ENCODE measurements at regions of chr3 and their contacts with region 1.

Region 1: GRCh38 chr3:151210676-151211381 is 7.8 kb upstream of the GPR171 start:
- DNase-seq: peak; percentile 35
- ATAC-seq: peak; percentile 98
- H3K4me3 ChIP-seq: peak overlapping the region; percentile 5 to 48 (median 41); a peak in 5 of 6 replicates
- H3K27ac ChIP-seq: peak overlapping the region; percentile 53
- H3K4me1 ChIP-seq: peaks cover 23% of the 10 kb centered on the region
- H3K27me3 ChIP-seq: no peaks in the 10 kb centered on the region
- CTCF ChIP-seq: peak; percentile 71
- EP300 ChIP-seq: no peak
- POLR2A ChIP-seq: no peak
- RAD21 ChIP-seq: no peak; the same call in 1 of the 2 replicates

Region 2: GRCh38 chr3:151107693-151108092 is 103.1 kb before region 1 on chr3:
- CTCF ChIA-PET with region 1: no interaction called
- POLR2A ChIA-PET with region 1: no interaction called
- in situ Hi-C with region 1: no loop called
- intact Hi-C with region 1: no loop called
- DNase-seq: no peak
- ATAC-seq: no peak
- H3K4me3 ChIP-seq: no peak overlapping the region
- H3K27ac ChIP-seq: no peak overlapping the region
- H3K4me1 ChIP-seq: peaks cover 11% of the 10 kb centered on the region; the same call in 1 of the 2 replicates
- H3K27me3 ChIP-seq: no peaks in the 10 kb centered on the region; a peak in 2 of 5 replicates
- CTCF ChIP-seq: no peak
- EP300 ChIP-seq: no peak
- POLR2A ChIP-seq: no peak
- RAD21 ChIP-seq: no peak

Region 3: GRCh38 chr3:151178208-151178845 is 32.5 kb before region 1 on chr3:
- CTCF ChIA-PET with region 1: no interaction called
- POLR2A ChIA-PET with region 1: interaction called, 14 read pairs
- in situ Hi-C with region 1: no loop called
- intact Hi-C with region 1: no loop called
- DNase-seq: peak; percentile 97
- ATAC-seq: peak; percentile 100
- H3K4me3 ChIP-seq: peak overlapping the region in 1 of 3 experiments; percentile 23; a peak in 2 of 6 replicates
- H3K27ac ChIP-seq: peak overlapping the region; percentile 73
- H3K4me1 ChIP-seq: peaks cover 74% of the 10 kb centered on the region
- H3K27me3 ChIP-seq: no peaks in the 10 kb centered on the region
- CTCF ChIP-seq: no peak
- EP300 ChIP-seq: peak; percentile 41 to 84; a peak in 3 of 4 replicates
- POLR2A ChIP-seq: no peak
- RAD21 ChIP-seq: no peak

Region 4: DNA sequence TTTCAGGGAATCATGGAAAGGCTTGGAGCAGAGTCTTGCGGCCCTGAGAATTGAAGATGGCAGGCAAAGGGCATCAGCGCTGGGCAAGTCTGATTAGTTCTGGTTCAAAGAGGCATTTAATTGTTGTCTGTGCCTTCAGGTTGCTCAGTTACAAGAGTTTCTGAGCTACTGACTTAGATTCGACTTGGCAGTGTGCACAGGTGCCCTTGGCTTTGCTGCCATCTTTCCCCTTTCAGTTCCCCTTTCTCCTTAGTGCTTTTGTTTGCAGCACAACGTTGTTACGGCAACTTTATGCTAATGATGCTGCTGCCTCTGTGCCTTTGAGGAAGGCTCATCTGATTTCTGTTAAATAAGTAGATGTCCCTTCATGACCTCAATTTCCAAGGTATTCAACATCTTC is 55.0 kb after region 1 on chr3:
- CTCF ChIA-PET with region 1: no interaction called
- POLR2A ChIA-PET with region 1: no interaction called
- in situ Hi-C with region 1: no loop called
- intact Hi-C with region 1: no loop called
- DNase-seq: no peak
- ATAC-seq: no peak
- H3K4me3 ChIP-seq: no peak overlapping the region
- H3K27ac ChIP-seq: no peak overlapping the region
- H3K4me1 ChIP-seq: no peaks in the 10 kb centered on the region
- H3K27me3 ChIP-seq: no peaks in the 10 kb centered on the region; a peak in 1 of 5 replicates
- CTCF ChIP-seq: no peak
- EP300 ChIP-seq: no peak
- POLR2A ChIP-seq: no peak
- RAD21 ChIP-seq: no peak

Region 5: DNA sequence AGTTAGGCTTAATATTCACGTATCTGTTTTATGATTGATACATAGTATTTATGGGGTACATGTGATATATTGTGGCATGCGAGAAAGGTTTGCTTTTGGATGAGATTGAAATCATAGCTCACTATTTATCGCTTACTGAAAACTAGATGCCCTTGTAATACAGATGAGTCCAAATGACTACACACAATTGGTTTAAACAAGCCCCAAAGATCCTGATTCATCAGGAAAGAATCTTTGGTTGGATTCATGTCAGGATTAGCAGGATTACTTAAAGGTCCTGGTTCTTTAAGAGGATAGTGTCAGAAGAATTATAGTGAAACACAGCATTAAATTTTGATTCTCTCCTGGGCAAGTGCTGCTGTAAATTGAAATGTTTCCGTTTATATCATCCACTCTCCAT is 584.4 kb after region 1 on chr3:
- CTCF ChIA-PET with region 1: no interaction called
- POLR2A ChIA-PET with region 1: no interaction called
- in situ Hi-C with region 1: loop called (anchors 25 kb)
- intact Hi-C with region 1: no loop called
- DNase-seq: no peak
- ATAC-seq: no peak
- H3K4me3 ChIP-seq: no peak overlapping the region
- H3K27ac ChIP-seq: no peak overlapping the region
- H3K4me1 ChIP-seq: peaks cover 24% of the 10 kb centered on the region
- H3K27me3 ChIP-seq: no peaks in the 10 kb centered on the region
- CTCF ChIP-seq: no peak
- EP300 ChIP-seq: no peak
- POLR2A ChIP-seq: no peak
- RAD21 ChIP-seq: no peak

Measured in HepG2 (cell line).